Adrenal gland (tissue), 19 donors: ENCODE measurements at regions of chr5 and their contacts with region 1.

Region 1: DNA sequence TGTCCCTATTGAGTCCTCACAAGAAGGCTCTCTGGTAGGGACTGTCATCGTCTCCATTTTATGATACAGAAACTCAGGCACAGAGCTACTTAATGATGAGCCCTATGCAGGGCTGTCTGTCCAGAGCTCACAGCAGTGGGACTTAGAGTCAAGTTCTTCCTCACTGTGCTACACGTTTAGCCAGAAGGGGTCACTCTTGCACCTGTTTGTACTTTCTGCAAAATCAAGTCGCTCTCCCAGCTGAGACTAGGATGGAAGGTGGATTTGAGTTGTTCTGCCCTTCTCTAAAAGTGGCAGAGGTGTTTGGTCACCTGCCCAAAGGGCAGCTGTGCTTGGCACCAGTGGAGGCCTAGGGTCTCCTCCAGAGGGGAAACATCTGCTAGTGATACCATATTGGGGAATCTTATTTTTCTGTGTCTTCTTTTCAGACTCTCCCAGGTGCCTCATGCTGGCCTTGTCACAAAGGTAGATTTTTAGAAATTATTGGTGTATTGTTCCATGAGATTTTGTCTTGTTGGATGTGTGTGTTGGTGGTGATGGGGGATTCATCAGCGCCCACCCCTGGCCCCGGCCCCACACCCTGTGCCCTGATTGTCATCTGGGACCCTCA is 104.2 kb downstream of the PPARGC1B start:
- DNase-seq: peak; percentile 72 to 91 (median 78)
- H3K4me3 ChIP-seq: no peak overlapping the region
- H3K27ac ChIP-seq: no peak overlapping the region
- H3K4me1 ChIP-seq: peaks cover 4 to 8% of the 10 kb centered on the region in 2 donors
- H3K27me3 ChIP-seq: no peaks in the 10 kb centered on the region
- CTCF ChIP-seq: peak; percentile 53 to 79 (median 76)
- POLR2A ChIP-seq: no peak

Region 2: DNA sequence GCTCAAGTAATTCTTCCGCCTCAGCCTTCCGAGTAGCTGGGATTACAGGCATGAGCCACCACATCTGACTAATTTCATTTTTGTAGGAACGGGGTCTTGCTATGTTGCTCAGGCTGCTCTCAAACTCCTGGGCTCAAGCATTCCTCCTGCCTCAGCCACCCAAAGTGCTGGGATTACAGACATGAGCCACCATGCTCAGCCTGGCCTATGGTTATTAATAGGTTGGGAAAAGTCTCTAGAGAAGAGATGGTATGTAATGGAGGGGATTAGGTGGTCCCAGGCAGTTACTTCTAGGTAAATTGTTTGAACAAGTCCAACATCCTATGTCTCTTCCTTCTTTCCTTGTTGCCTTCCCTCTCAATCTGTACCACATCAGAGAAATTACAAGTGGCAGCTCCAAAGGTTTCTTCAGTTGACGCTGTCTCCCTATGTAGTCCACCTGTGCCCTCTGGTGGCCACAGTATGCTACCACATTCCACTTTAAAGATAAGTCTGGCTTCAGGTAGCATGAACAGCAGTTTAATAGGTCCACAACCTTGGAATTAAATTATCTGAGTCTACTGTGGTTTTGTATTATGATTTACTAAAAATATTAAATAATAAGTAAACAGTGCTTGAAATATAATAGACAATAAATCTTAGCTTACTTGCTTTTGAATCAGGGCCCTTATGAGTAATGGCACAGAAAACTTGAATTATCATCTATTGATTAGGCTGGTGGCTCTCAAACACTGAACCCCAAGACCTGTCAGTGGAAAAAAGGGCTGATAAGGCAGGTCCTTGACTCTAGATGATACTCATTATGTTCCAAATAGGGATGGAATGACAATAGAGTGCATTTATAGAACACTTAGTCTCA is 156.4 kb after region 1 on chr5:
- intact Hi-C with region 1: loop called (anchors 5 kb)
- DNase-seq: peak; percentile 67 to 93 (median 83)
- H3K4me3 ChIP-seq: no peak overlapping the region
- H3K27ac ChIP-seq: no peak overlapping the region
- H3K4me1 ChIP-seq: no peaks in the 10 kb centered on the region
- H3K27me3 ChIP-seq: no peaks in the 10 kb centered on the region
- CTCF ChIP-seq: peak; percentile 94 to 98 (median 96)
- POLR2A ChIP-seq: no peak

Region 3: GRCh38 chr5:150106674-150107426 is 272.5 kb after region 1 on chr5:
- intact Hi-C with region 1: loop called in 1 of 2 experiments (anchors 5 kb)
- DNase-seq: peak in 1 of 7 donors; percentile 46
- H3K4me3 ChIP-seq: no peak overlapping the region
- H3K27ac ChIP-seq: peak overlapping the region in 1 of 5 donors; percentile 67
- H3K4me1 ChIP-seq: peaks cover 0 to 8% of the 10 kb centered on the region in 2 donors
- H3K27me3 ChIP-seq: no peaks in the 10 kb centered on the region
- CTCF ChIP-seq: no peak
- POLR2A ChIP-seq: no peak